ENCODE measurements at regions of chr6 and their contacts with region 1.

Region 1: GRCh38 chr6:143427109-143427817 is 23.2 kb downstream of the ADAT2 start:
- DNase-seq: peak; percentile 77
- ATAC-seq: peak; percentile 92

Region 2: DNA sequence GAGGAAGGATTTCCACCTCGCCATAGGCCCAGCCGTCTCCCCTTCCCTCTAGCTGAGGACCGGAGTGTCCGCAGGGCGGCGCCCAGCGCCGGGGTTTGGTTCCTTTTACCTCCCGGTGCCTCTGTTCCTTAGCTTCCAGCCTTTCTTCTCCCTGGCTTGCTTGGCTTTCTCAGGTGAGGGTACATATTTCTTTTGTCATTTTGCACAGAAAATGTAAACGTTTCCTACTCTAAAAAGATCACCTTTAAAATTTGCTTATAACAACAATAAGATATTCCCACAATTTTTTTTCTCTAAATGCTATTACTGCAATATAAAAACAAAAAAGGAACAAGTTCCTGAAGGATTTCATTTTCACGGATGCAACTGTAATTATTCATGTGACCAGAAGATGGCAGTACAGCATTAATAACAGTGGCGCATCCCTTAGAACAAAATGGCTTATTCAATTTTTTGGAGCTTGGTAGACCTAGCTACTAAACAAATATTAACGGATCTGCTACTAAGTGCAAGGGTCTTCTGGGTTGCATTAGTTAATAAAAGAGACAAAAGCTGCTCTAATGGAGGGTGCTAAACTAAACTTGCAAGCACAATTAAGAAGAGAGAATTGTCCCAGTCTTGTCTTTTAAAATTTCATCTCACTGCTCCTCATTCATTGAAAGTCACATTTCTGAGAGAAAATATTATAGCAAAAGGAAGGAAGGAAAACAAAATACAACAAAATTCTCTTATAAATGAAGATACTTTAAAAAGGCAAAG is 952.6 kb before region 1 on chr6:
- intact Hi-C with region 1: loop called (anchors 5 kb)
- DNase-seq: no peak
- ATAC-seq: no peak

Region 3: GRCh38 chr6:142566628-142567396 is 860.5 kb before region 1 on chr6:
- intact Hi-C with region 1: loop called (anchors 10 kb)
- DNase-seq: no peak
- ATAC-seq: peak; percentile 54

Region 4: DNA sequence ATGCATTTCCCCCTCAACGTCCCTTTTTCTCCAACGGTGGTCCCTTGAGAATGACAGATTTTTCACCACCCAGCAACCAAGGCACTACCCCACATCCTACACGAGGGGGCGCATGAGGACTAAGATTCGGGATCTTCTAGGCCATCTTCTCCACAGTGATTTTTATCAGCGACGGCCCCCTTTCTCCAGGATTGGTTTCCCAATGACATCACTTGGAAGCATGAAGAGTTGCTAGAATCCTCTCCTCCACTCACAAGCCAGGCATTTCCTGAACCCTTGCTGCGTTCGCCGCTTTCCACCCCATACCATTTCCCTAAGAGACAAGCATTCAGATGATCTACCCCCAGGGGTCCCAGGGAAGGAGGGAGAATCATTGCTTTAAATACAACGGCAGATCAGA is 734.3 kb before region 1 on chr6:
- intact Hi-C with region 1: loop called (anchors 2 kb)
- DNase-seq: no peak
- ATAC-seq: peak; percentile 76

Region 5: DNA sequence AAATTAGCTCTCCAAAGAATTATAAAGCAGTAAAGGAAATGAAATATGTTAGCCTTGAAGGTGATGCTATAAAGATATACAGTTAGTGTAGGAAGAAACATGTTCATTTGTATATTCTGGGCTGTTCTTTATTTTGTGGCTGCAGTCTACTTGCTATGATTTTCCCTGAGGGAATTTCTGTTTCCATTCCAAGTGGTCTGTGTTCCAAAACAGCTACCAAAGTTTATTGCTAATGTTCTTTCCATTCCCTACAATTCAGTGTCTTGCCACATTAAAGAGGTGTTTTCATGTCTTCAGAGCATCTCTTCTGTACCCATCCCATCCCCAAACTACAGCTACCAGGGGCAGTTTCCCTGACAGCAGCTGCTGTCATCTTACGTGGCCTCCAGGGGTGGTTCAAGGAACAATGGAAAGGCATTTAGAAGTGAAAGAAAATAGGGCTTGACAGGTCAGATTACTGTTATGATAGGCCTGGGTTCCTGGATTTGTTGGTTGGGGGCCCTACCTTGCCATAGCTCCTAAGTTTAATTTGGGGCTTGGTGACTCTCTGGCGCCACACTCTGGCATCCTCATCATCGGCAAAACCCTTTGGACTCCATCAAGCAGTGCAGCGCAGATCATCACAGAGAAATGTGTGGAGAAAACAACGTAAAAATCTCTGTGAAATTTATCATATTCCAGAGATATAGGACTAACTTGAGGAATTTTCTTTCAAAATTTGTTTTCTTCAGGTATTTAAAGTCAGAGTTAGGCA is 400.4 kb before region 1 on chr6:
- intact Hi-C with region 1: loop called (anchors 10 kb)
- DNase-seq: peak; percentile 60
- ATAC-seq: no peak